Endothelial cell of umbilical vein (primary cell): ENCODE measurements at regions of chr4 and their contacts with region 1.

Region 1: DNA sequence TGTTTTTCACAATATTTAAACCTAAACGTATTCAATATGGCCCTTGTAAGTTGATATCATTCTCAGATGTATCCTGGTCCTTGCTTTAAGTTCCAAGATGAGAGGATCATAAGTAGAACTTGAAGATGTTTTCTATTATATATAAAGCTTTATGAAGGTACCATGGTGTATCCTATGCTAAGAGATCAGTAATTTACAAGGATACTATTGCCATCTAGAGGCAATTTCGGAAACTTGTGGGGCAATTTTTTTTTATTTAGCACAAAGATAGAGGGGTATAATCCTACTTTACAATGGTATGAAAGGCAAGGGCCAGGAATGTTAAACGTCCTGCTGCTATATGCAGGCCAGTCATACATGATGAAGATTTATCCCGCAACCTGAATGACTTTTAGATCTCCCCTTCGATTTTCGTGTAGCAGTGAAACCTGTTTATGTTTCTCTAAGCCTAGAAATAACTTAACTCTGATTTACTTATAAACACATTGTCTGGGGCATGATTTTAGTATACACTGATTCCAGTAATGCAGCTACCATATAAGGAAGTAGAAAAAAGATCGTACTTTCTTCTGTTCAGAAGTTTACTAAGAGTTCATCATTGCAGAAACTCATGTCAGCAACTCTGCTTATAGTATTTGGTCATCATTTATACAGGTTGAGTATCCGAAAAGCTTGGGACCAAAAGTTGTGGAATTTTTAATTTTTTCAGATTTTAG is 2.6 kb downstream of the SLC25A31 start:
- DNase-seq: peak; percentile 59
- H3K4me3 ChIP-seq: no peak overlapping the region
- H3K27ac ChIP-seq: no peak overlapping the region
- H3K4me1 ChIP-seq: no peaks in the 10 kb centered on the region
- H3K27me3 ChIP-seq: peaks cover 2 to 4% of the 10 kb centered on the region in 2 experiments
- CTCF ChIP-seq: peak; percentile 23 to 28
- POLR2A ChIP-seq: no peak

Region 2: GRCh38 chr4:127598656-127599055 is 134.1 kb before region 1 on chr4:
- CTCF ChIA-PET with region 1: interaction called, 414 read pairs
- POLR2A ChIA-PET with region 1: no interaction called
- dilution Hi-C with region 1: no loop called
- intact Hi-C with region 1: no loop called
- DNase-seq: no peak
- H3K4me3 ChIP-seq: no peak overlapping the region
- H3K27ac ChIP-seq: no peak overlapping the region
- H3K4me1 ChIP-seq: no peaks in the 10 kb centered on the region
- H3K27me3 ChIP-seq: peaks cover 2 to 14% of the 10 kb centered on the region in 2 experiments
- CTCF ChIP-seq: no peak
- POLR2A ChIP-seq: no peak

Region 3: DNA sequence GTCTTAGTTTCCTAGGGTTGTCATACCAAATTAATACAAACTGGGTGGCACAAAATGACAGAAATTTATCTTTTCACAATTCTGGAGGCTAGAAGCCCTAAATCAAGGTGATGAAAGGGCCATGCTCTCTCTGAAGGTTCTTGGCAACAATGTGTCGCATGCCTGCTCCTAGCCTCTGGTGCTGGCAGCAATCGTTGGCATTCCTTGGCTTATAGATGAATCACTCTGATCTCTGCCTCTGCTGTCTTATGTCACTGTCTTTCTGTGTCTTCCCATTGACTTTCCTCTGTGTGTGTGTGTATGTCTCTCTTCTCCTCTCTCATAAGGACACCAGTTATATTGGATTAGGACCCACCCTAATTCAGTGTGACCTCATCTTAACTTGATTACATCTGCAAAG is 115.9 kb before region 1 on chr4:
- CTCF ChIA-PET with region 1: interaction called, 22 read pairs
- POLR2A ChIA-PET with region 1: no interaction called
- dilution Hi-C with region 1: no loop called
- intact Hi-C with region 1: no loop called
- DNase-seq: no peak
- H3K4me3 ChIP-seq: no peak overlapping the region
- H3K27ac ChIP-seq: no peak overlapping the region
- H3K4me1 ChIP-seq: no peaks in the 10 kb centered on the region
- H3K27me3 ChIP-seq: peaks cover 23 to 36% of the 10 kb centered on the region in 2 experiments
- CTCF ChIP-seq: no peak
- POLR2A ChIP-seq: no peak

Region 4: GRCh38 chr4:127632420-127633403 is 100.1 kb before region 1 on chr4 and contains the start of gene INTU:
- CTCF ChIA-PET with region 1: interaction called, 14 read pairs
- POLR2A ChIA-PET with region 1: no interaction called
- dilution Hi-C with region 1: no loop called
- intact Hi-C with region 1: no loop called
- DNase-seq: peak; percentile 97
- H3K4me3 ChIP-seq: peak within 1 kb of the TSS; percentile 65 to 93 (median 74)
- H3K27ac ChIP-seq: peak within 1 kb of the TSS; percentile 45
- H3K4me1 ChIP-seq: peaks cover 22% of the 10 kb centered on the region
- H3K27me3 ChIP-seq: no peaks in the 10 kb centered on the region
- CTCF ChIP-seq: no peak
- POLR2A ChIP-seq: peak; percentile 42
- total RNA-seq, gene INTU: 4.3 and 5.4 TPM in 2 replicates

Region 5: GRCh38 chr4:127698789-127699200 is 34.0 kb before region 1 on chr4:
- CTCF ChIA-PET with region 1: interaction called, 5 read pairs
- POLR2A ChIA-PET with region 1: interaction called, 3 read pairs
- dilution Hi-C with region 1: no loop called
- intact Hi-C with region 1: loop called (anchors 1 kb)
- DNase-seq: no peak
- H3K4me3 ChIP-seq: no peak overlapping the region
- H3K27ac ChIP-seq: no peak overlapping the region
- H3K4me1 ChIP-seq: no peaks in the 10 kb centered on the region
- H3K27me3 ChIP-seq: no peaks in the 10 kb centered on the region
- CTCF ChIP-seq: no peak
- POLR2A ChIP-seq: no peak

Region 6: GRCh38 chr4:127759228-127759820 is 26.6 kb after region 1 on chr4:
- CTCF ChIA-PET with region 1: no interaction called
- POLR2A ChIA-PET with region 1: no interaction called
- dilution Hi-C with region 1: no loop called
- intact Hi-C with region 1: no loop called
- DNase-seq: no peak
- H3K4me3 ChIP-seq: no peak overlapping the region
- H3K27ac ChIP-seq: no peak overlapping the region
- H3K4me1 ChIP-seq: no peaks in the 10 kb centered on the region
- H3K27me3 ChIP-seq: no peaks in the 10 kb centered on the region
- CTCF ChIP-seq: no peak
- POLR2A ChIP-seq: no peak

Region 7: DNA sequence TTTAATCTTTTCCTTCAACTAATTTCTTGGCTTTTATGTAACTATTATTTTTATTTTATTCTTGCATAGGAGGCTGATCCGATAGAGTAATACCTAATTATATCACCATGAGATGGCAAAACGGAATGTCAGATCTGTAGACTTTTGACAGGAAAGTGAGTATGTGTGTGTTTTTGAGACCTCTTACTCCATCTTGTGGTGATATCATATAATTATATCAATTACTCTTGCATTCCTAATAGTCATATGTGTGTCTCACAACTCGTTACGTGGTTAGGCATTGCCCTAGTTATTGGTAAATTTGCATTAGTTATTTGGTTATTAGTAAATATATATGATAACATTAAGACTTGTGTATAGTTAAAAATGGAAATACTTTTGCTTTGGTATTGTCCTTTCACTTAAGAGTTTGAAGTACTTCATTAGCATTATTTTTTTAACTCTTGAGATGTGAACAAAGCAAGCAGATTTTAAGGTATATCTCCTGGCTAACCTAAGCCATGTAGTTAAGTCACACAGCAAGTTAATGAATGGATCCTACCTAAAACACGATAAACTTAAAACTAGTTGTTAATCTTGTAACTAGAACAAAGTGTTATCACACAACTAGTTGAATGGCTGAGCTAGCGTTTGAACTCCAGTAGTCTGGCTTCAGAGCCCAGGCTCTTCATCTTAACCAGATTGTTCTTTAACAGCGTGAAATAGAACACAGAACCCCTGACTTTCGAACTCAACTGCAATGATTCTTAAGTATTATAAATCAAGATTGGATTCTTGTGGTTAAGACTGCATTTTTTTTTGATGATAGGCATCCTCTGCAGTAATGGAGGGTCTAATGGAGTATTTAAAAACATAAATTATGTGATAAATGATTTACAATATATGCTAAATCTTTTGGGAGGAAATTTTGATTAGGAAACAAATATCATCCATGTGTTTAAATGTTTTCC is 487.8 kb after region 1 on chr4:
- CTCF ChIA-PET with region 1: interaction called, 6 read pairs
- POLR2A ChIA-PET with region 1: no interaction called
- dilution Hi-C with region 1: no loop called
- intact Hi-C with region 1: loop called (anchors 2 kb)
- DNase-seq: peak; percentile 70
- H3K4me3 ChIP-seq: no peak overlapping the region
- H3K27ac ChIP-seq: peak overlapping the region; percentile 28
- H3K4me1 ChIP-seq: no peaks in the 10 kb centered on the region
- H3K27me3 ChIP-seq: no peaks in the 10 kb centered on the region
- CTCF ChIP-seq: peak; percentile 16 to 20
- POLR2A ChIP-seq: no peak